Esophagus muscularis mucosa (tissue), 4 donors: ENCODE measurements at regions of chr9 and their contacts with region 1.

Region 1: GRCh38 chr9:76996700-76997099 is 22.8 kb upstream of the FOXB2 start:
- DNase-seq: no peak
- H3K4me3 ChIP-seq: no peak overlapping the region
- H3K27ac ChIP-seq: no peak overlapping the region
- H3K4me1 ChIP-seq: peaks cover 0 to 10% (median 6%) of the 10 kb centered on the region in 4 donors
- H3K27me3 ChIP-seq: no peaks in the 10 kb centered on the region
- CTCF ChIP-seq: peak; percentile 63 to 74 (median 74)
- EP300 ChIP-seq: no peak
- POLR2A ChIP-seq: no peak

Region 2: GRCh38 chr9:76451234-76451633 is 545.5 kb before region 1 on chr9:
- intact Hi-C with region 1: loop called (anchors 5 kb)
- DNase-seq: no peak
- H3K4me3 ChIP-seq: no peak overlapping the region
- H3K27ac ChIP-seq: no peak overlapping the region
- H3K4me1 ChIP-seq: peaks cover 0 to 7% (median 3%) of the 10 kb centered on the region in 4 donors
- H3K27me3 ChIP-seq: peaks cover 0 to 3% (median 0%) of the 10 kb centered on the region in 4 donors
- CTCF ChIP-seq: no peak
- EP300 ChIP-seq: no peak
- POLR2A ChIP-seq: no peak